ENCODE measurements at regions of chrX and their contacts with region 1.

Region 1: GRCh38 chrX:115330498-115331168 is 41.1 kb downstream of the LUZP4 start:
- DNase-seq: peak in 1 of 3 donors; percentile 29
- ATAC-seq: peak; percentile 51 to 58
- H3K4me3 ChIP-seq: peak overlapping the region; percentile 29
- H3K27ac ChIP-seq: no peak overlapping the region
- H3K4me1 ChIP-seq: no peaks in the 10 kb centered on the region
- H3K27me3 ChIP-seq: no peaks in the 10 kb centered on the region

Region 2: DNA sequence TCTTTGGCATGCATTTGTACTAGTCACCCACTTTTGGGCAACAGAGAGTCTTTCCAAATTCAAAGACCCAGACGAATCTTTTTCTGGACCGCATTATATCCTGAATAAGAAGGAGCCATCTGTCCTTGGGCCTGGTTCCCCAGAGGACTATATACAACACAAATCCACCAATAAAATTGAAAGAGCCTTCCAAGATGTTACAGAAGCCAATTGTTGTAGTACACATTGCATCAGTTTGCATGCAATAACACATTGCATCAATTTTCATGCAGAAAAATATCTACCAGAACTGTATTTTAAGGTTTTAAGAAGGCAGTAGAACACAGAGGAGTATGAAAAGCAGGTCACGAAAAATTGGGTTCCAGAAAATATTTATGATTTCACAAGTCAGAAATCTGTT is 543.6 kb before region 1 on chrX:
- intact Hi-C with region 1: no loop called
- DNase-seq: no peak
- ATAC-seq: no peak
- H3K4me3 ChIP-seq: no peak overlapping the region
- H3K27ac ChIP-seq: no peak overlapping the region
- H3K4me1 ChIP-seq: no peaks in the 10 kb centered on the region
- H3K27me3 ChIP-seq: no peaks in the 10 kb centered on the region

Region 3: GRCh38 chrX:115284877-115285276 is 45.8 kb before region 1 on chrX:
- intact Hi-C with region 1: no loop called
- DNase-seq: no peak
- ATAC-seq: no peak
- H3K4me3 ChIP-seq: no peak overlapping the region
- H3K27ac ChIP-seq: no peak overlapping the region
- H3K4me1 ChIP-seq: no peaks in the 10 kb centered on the region
- H3K27me3 ChIP-seq: no peaks in the 10 kb centered on the region

Region 4: GRCh38 chrX:115449742-115450141 is 119.1 kb after region 1 on chrX:
- intact Hi-C with region 1: no loop called
- DNase-seq: peak; percentile 46 to 82 (median 73)
- ATAC-seq: no peak
- H3K4me3 ChIP-seq: no peak overlapping the region
- H3K27ac ChIP-seq: no peak overlapping the region
- H3K4me1 ChIP-seq: peaks cover 2% of the 10 kb centered on the region
- H3K27me3 ChIP-seq: no peaks in the 10 kb centered on the region

Region 5: GRCh38 chrX:115504167-115504566 is 173.5 kb after region 1 on chrX:
- intact Hi-C with region 1: no loop called
- DNase-seq: no peak
- ATAC-seq: no peak
- H3K4me3 ChIP-seq: no peak overlapping the region
- H3K27ac ChIP-seq: no peak overlapping the region
- H3K4me1 ChIP-seq: no peaks in the 10 kb centered on the region
- H3K27me3 ChIP-seq: no peaks in the 10 kb centered on the region

Region 6: DNA sequence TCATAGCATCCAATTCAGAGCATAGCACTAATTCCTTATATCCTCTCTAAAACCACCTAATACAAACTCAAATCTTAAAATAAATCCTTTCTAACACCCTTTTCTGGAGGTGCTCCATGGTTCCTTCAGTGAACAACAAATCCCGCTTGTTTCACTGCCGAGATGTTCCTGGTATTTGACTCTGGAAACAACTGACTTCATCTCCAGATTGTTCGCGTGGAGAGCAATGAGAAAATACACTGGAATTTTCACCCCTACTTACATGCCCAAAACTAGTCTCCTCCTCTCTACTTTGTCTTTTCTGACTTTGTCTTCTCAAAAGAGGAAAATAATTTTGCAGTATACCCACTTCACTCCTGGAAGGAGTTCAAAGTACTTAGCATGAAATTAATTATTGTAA is 359.3 kb after region 1 on chrX:
- intact Hi-C with region 1: loop called in 1 of 4 experiments (anchors 10 kb)
- DNase-seq: no peak
- ATAC-seq: no peak
- H3K4me3 ChIP-seq: no peak overlapping the region
- H3K27ac ChIP-seq: no peak overlapping the region
- H3K4me1 ChIP-seq: no peaks in the 10 kb centered on the region
- H3K27me3 ChIP-seq: no peaks in the 10 kb centered on the region